ENCODE measurements at regions of chr1 and their contacts with region 1.

Region 1: DNA sequence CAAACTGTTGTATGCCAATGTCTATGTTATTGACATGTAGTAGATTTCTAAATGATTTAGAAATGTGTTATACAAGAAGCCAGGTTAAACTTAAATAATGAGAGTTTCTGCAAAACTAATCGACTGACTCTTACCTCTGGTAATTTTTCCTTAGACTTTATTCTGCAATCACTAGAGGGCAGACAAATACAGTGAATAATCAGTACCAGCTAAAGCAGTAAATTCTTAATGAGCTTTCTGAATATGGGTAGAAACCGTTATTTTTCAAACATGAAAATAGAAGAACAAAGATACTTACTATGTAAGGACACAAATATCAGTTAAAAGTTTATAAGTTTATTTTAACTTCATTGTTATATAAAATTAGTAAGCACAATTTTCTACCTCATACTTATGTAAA is 97.9 kb upstream of the RGS1 start:
- DNase-seq: peak in 3 of 14 experiments; percentile 63 to 67 (median 66)
- ATAC-seq: peak; percentile 85
- H3K4me3 ChIP-seq: no peak overlapping the region
- H3K4me3 Mint-ChIP-seq: no peak overlapping the region
- H3K27ac ChIP-seq: no peak overlapping the region
- H3K27ac Mint-ChIP-seq: no peak overlapping the region
- H3K4me1 ChIP-seq: no peaks in the 10 kb centered on the region
- H3K4me1 Mint-ChIP-seq: no peaks in the 10 kb centered on the region
- H3K27me3 ChIP-seq: peaks cover 0 to 11% of the 10 kb centered on the region in 2 experiments
- H3K27me3 Mint-ChIP-seq: no peaks in the 10 kb centered on the region
- CTCF ChIP-seq: peak; percentile 70

Region 2: GRCh38 chr1:192516776-192517297 is 39.2 kb after region 1 on chr1:
- CTCF ChIA-PET with region 1: interaction called, 19 read pairs
- POLR2A ChIA-PET with region 1: interaction called, 4 read pairs
- intact Hi-C with region 1: loop called (anchors 2 to 5 kb)
- DNase-seq: peak in 13 of 14 experiments; percentile 19 to 95 (median 32)
- ATAC-seq: peak; percentile 91
- H3K4me3 ChIP-seq: peak overlapping the region; percentile 17
- H3K4me3 Mint-ChIP-seq: peak overlapping the region; percentile 73
- H3K27ac ChIP-seq: peak overlapping the region in 1 of 2 donors; percentile 49
- H3K27ac Mint-ChIP-seq: peak overlapping the region; percentile 87
- H3K4me1 ChIP-seq: peaks cover 18% of the 10 kb centered on the region
- H3K4me1 Mint-ChIP-seq: peaks cover 45% of the 10 kb centered on the region
- H3K27me3 ChIP-seq: no peaks in the 10 kb centered on the region
- H3K27me3 Mint-ChIP-seq: no peaks in the 10 kb centered on the region
- CTCF ChIP-seq: no peak

Region 3: GRCh38 chr1:192580351-192580962 is 102.8 kb after region 1 on chr1:
- CTCF ChIA-PET with region 1: interaction called, 25 read pairs
- POLR2A ChIA-PET with region 1: no interaction called
- intact Hi-C with region 1: loop called (anchors 1 to 2 kb)
- DNase-seq: peak in 4 of 14 experiments; percentile 36 to 72 (median 60)
- ATAC-seq: peak; percentile 30
- H3K4me3 ChIP-seq: no peak overlapping the region
- H3K4me3 Mint-ChIP-seq: no peak overlapping the region
- H3K27ac ChIP-seq: no peak overlapping the region
- H3K27ac Mint-ChIP-seq: peak overlapping the region; percentile 48
- H3K4me1 ChIP-seq: peaks cover 4% of the 10 kb centered on the region
- H3K4me1 Mint-ChIP-seq: peaks cover 46% of the 10 kb centered on the region
- H3K27me3 ChIP-seq: no peaks in the 10 kb centered on the region
- H3K27me3 Mint-ChIP-seq: no peaks in the 10 kb centered on the region
- CTCF ChIP-seq: peak; percentile 65

Region 4: GRCh38 chr1:192801451-192801850 is 323.8 kb after region 1 on chr1:
- CTCF ChIA-PET with region 1: interaction called, 5 read pairs
- POLR2A ChIA-PET with region 1: no interaction called
- intact Hi-C with region 1: loop called in 1 of 2 experiments (anchors 5 kb)
- DNase-seq: no peak
- ATAC-seq: no peak
- H3K4me3 ChIP-seq: no peak overlapping the region
- H3K4me3 Mint-ChIP-seq: no peak overlapping the region
- H3K27ac ChIP-seq: no peak overlapping the region
- H3K27ac Mint-ChIP-seq: no peak overlapping the region
- H3K4me1 ChIP-seq: no peaks in the 10 kb centered on the region
- H3K4me1 Mint-ChIP-seq: no peaks in the 10 kb centered on the region
- H3K27me3 ChIP-seq: no peaks in the 10 kb centered on the region
- H3K27me3 Mint-ChIP-seq: no peaks in the 10 kb centered on the region
- CTCF ChIP-seq: no peak

Region 5: GRCh38 chr1:193019442-193020026 is 541.9 kb after region 1 on chr1:
- CTCF ChIA-PET with region 1: interaction called, 11 read pairs
- POLR2A ChIA-PET with region 1: no interaction called
- intact Hi-C with region 1: loop called in 1 of 2 experiments (anchors 5 kb)
- DNase-seq: peak in 3 of 14 experiments; percentile 60 to 65 (median 63)
- ATAC-seq: no peak
- H3K4me3 ChIP-seq: no peak overlapping the region
- H3K4me3 Mint-ChIP-seq: no peak overlapping the region
- H3K27ac ChIP-seq: no peak overlapping the region
- H3K27ac Mint-ChIP-seq: no peak overlapping the region
- H3K4me1 ChIP-seq: no peaks in the 10 kb centered on the region
- H3K4me1 Mint-ChIP-seq: no peaks in the 10 kb centered on the region
- H3K27me3 ChIP-seq: no peaks in the 10 kb centered on the region
- H3K27me3 Mint-ChIP-seq: no peaks in the 10 kb centered on the region
- CTCF ChIP-seq: peak; percentile 68

Region 6: GRCh38 chr1:194295685-194296084 is 1818.1 kb after region 1 on chr1:
- CTCF ChIA-PET with region 1: no interaction called
- POLR2A ChIA-PET with region 1: no interaction called
- intact Hi-C with region 1: loop called in 1 of 2 experiments (anchors 2 kb)
- DNase-seq: peak in 8 of 14 experiments; percentile 7 to 85 (median 30)
- ATAC-seq: peak; percentile 99
- H3K4me3 ChIP-seq: no peak overlapping the region
- H3K4me3 Mint-ChIP-seq: no peak overlapping the region
- H3K27ac ChIP-seq: no peak overlapping the region
- H3K27ac Mint-ChIP-seq: peak overlapping the region; percentile 13
- H3K4me1 ChIP-seq: peaks cover 4% of the 10 kb centered on the region
- H3K4me1 Mint-ChIP-seq: peaks cover 23% of the 10 kb centered on the region
- H3K27me3 ChIP-seq: no peaks in the 10 kb centered on the region
- H3K27me3 Mint-ChIP-seq: no peaks in the 10 kb centered on the region
- CTCF ChIP-seq: peak; percentile 92